ENCODE measurements at regions of chr3 and their contacts with region 1.

Region 1: GRCh38 chr3:195559723-195560409 is 16.7 kb upstream of the PPP1R2 start:
- DNase-seq: no peak
- ATAC-seq: peak; percentile 31 to 61
- H3K4me3 ChIP-seq: no peak overlapping the region
- H3K27ac ChIP-seq: no peak overlapping the region
- H3K4me1 ChIP-seq: no peaks in the 10 kb centered on the region
- H3K27me3 ChIP-seq: no peaks in the 10 kb centered on the region

Region 2: DNA sequence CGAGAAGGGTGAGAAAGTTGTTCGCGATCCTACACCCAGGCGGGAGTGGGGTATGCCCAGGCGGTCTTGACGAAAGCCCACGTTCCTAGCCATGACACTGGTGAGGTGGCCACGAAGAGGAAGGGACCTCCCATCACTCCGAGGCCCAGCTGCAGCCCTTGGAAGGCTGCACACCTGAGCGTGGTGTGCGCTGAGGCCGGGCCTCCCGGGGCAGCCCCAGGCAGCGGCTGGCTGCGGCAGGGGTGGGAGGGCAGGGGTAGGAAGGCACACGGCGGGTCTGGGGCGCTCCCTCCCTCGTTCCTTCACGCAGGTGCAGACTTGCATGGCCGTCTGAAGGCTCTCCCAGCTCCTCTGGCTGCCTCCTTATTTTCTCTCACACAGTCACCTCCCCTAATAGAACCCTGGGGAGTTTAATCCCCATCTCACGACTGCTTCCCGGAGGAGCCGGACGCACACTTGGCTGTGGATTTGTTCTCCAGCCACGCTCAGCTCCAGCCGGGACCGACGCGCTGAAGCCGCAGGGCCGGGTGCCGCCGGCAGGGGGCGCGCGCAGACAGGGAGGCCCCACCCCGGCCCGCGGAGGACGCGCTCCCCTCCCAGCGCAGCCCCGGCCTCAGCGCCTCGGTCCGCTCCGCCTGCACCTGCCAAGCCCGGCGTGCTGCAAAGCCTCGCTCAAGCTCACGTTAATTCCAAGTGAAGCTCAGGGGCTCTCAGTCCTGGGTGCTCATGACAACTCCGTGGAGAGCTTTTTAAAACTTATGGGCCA is 289.6 kb after region 1 on chr3:
- intact Hi-C with region 1: loop called in 1 of 4 experiments (anchors 10 kb)
- DNase-seq: peak in 1 of 3 donors; percentile 55
- ATAC-seq: no peak
- H3K4me3 ChIP-seq: no peak overlapping the region
- H3K27ac ChIP-seq: no peak overlapping the region
- H3K4me1 ChIP-seq: no peaks in the 10 kb centered on the region
- H3K27me3 ChIP-seq: no peaks in the 10 kb centered on the region

Region 3: DNA sequence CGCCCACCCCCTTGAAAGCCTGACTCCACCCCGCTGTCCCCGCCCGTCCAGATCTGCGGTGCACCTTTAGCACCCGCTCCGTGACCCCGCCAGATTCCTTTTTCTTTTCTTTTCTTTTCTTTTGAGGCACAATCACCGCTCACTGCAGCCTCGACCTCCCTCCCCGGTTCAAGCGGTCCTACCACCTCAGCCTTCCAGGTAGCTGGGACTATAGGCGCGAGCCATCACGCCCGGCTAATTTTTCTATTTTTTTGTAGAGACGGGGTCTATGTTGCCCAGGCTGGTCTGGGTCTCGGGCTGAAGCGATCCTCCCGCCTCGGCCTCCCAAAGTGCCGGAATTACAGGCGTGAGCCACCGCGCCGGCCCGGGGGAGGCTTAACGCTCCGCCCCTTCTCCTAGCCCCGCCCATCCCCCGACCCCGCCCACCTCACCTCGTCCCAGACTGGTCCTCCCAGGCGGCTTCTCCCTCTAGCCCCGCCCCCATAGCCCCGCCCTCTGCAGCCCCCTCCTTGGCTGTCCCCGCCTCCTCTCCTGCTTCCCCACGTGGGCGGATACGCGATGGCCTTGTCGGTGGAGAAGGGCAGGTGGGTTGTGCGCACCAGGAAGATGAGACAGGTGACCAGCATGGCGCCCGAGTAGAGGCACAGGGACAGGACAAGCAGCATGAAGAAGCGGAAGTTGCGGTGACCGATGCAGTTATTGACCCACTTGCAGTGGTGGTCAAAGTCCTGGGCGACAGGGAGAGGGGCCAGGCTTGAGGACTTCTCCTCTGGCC is 648.2 kb after region 1 on chr3:
- intact Hi-C with region 1: no loop called
- DNase-seq: peak; percentile 55 to 84 (median 70)
- ATAC-seq: peak; percentile 59 to 74
- H3K4me3 ChIP-seq: no peak overlapping the region
- H3K27ac ChIP-seq: no peak overlapping the region
- H3K4me1 ChIP-seq: no peaks in the 10 kb centered on the region
- H3K27me3 ChIP-seq: no peaks in the 10 kb centered on the region